Endothelial cell of umbilical vein (primary cell): ENCODE measurements at regions of chr2 and their contacts with region 1.

Region 1: DNA sequence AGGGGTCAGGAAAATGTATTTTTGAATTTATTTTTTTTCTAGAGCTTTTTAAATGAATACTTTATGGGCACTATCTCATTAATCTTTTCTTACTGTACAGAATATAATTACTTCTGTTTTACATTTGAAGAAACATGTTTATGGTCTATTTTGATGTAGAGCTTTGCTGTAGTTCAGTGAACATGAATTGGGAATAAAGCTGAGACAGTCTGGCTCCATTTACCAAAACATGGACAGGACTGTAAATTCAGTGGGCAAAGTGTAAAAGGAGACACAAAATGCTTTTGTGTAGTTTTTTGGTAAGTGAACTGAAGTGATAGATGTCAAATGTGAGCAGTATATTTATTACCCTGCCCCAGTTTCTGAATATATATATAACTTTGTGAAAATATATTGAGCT is 1298.8 kb upstream of the NXPH2 start:
- DNase-seq: no peak
- H3K4me3 ChIP-seq: no peak overlapping the region
- H3K27ac ChIP-seq: no peak overlapping the region
- H3K4me1 ChIP-seq: no peaks in the 10 kb centered on the region
- H3K27me3 ChIP-seq: no peaks in the 10 kb centered on the region
- CTCF ChIP-seq: no peak
- POLR2A ChIP-seq: no peak

Region 2: DNA sequence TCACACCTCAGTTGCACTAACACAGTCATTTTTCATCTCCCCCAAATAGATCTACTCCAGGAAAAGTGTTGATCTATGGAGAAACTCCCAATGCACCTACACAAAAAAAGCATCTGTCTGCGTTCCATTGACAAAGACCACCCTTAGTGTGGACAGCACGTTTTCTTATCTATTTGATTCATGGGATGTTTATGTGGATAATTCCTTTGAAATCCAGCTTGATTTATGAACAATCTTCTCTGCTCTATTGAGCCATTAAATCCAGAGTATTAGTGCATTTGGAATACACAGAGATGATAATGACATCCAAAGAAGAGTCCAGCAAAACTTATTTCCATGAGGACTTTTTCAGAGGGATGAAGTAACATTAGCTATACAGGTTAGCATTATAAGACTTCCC is 76.9 kb before region 1 on chr2:
- CTCF ChIA-PET with region 1: no interaction called
- POLR2A ChIA-PET with region 1: no interaction called
- dilution Hi-C with region 1: no loop called
- intact Hi-C with region 1: loop called (anchors 2 kb)
- DNase-seq: no peak
- H3K4me3 ChIP-seq: no peak overlapping the region
- H3K27ac ChIP-seq: no peak overlapping the region
- H3K4me1 ChIP-seq: no peaks in the 10 kb centered on the region
- H3K27me3 ChIP-seq: no peaks in the 10 kb centered on the region
- CTCF ChIP-seq: no peak
- POLR2A ChIP-seq: no peak